ENCODE measurements at regions of chr11 and their contacts with region 1.

Region 1: DNA sequence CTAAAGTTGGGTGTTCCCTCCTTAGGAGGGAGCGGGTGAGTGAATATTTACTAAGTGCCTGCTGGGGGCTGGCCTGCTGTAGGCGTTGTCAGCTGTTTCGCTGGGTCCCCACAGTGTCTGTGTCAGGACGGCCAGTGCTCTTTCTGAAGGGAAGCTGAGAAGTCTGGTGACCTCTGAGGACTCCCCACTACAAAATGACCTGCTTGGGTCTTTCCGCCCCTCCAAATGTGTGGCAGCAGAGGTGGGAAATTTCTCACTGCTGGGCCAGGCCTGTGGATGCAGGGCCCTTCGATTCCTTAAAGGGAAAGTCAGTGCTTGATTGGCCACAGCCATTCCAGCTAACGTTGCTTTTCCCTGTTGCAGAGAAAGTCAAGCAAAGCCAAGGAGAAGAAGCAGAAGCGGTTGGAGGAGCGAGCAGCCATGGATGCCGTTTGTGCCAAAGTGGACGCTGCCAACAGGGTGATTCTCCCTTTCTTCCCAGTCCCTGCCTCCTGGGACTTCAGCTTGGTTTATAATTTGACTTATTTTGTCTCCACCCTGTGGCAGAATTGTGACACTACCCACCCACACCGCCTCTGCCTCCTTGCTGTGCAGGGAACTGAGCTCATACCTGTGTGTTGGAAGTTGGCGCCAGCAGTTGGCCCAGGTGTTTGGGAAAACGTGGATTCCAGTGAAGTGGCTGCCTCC is 6.8 kb downstream of the NAA40 start:
- DNase-seq: peak; percentile 68
- H3K4me3 Mint-ChIP-seq: no peak overlapping the region
- H3K27ac Mint-ChIP-seq: no peak overlapping the region
- H3K4me1 Mint-ChIP-seq: peaks cover 26% of the 10 kb centered on the region
- H3K27me3 Mint-ChIP-seq: no peaks in the 10 kb centered on the region

Region 2: GRCh38 chr11:63768237-63769043 is 177.2 kb before region 1 on chr11 and contains the start of gene ZFTA:
- CTCF ChIA-PET with region 1: interaction called, 22 read pairs
- DNase-seq: peak; percentile 68
- H3K4me3 Mint-ChIP-seq: peak within 1 kb of the TSS; percentile 89
- H3K27ac Mint-ChIP-seq: peak within 1 kb of the TSS; percentile 55
- H3K4me1 Mint-ChIP-seq: peaks cover 15% of the 10 kb centered on the region
- H3K27me3 Mint-ChIP-seq: peaks cover 51% of the 10 kb centered on the region

Region 3: GRCh38 chr11:63920939-63921417 is 24.6 kb before region 1 on chr11:
- CTCF ChIA-PET with region 1: interaction called, 13 read pairs
- DNase-seq: no peak
- H3K4me3 Mint-ChIP-seq: no peak overlapping the region
- H3K27ac Mint-ChIP-seq: no peak overlapping the region
- H3K4me1 Mint-ChIP-seq: peaks cover 15% of the 10 kb centered on the region
- H3K27me3 Mint-ChIP-seq: peaks cover 94% of the 10 kb centered on the region

Region 4: GRCh38 chr11:63961608-63962412 is 16.2 kb after region 1 on chr11:
- CTCF ChIA-PET with region 1: interaction called, 12 read pairs
- DNase-seq: peak; percentile 57
- H3K4me3 Mint-ChIP-seq: no peak overlapping the region
- H3K27ac Mint-ChIP-seq: no peak overlapping the region
- H3K4me1 Mint-ChIP-seq: peaks cover 26% of the 10 kb centered on the region
- H3K27me3 Mint-ChIP-seq: peaks cover 4% of the 10 kb centered on the region

Measured in activated naive CD4-positive, alpha-beta T cell treated with anti-CD3 and anti-CD28 coated beads, Interleukin-2, amount 10 ng/mL, durations not matched to agents 7 days and 5 days (primary cell).